K562 (cell line): ENCODE measurements at regions of chr9 and their contacts with region 1.

Region 1: DNA sequence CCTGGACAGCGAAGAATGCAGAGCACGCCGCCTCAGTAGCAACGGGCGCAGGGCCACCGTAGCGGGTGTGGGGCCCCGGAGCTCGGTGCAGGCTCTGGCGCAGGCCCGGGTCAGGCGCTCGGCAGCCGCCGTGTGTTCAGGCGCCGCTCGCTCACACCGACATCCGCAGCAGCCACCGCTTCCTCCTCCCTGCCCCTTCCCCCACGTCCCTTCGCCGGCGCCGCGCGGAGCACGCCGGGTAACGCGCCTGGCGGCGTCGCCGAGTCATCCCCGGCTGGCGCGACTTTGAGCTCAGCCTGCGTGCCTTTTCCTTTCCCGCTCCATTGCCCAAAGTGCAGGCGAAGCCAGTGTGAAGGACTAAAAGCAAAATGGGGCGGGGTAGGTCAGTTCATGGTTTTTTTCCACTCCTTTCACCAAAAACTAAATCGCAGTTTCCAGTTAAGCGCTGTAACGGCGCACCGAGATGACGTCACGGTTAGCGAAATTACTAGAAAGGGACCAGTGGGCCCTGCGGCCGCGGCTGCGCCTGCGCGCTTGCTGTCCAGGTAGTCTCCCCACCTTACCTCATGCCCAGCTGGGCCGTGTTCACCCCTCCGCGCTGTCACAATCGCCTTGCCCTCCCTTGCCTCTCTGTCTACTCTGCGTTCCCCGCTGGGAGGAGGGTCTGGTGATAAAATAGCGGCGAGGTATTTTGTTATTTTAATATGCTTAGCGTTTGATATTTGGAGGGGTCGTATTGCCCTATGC is at the start of gene UBQLN1:
- DNase-seq: peak; percentile 87 to 93 (median 90)
- ATAC-seq: peak; percentile 83
- H3K4me3 ChIP-seq: peak within 1 kb of the TSS; percentile 93
- H3K27ac ChIP-seq: peak within 1 kb of the TSS; percentile 99
- H3K4me1 ChIP-seq: peaks cover 4 to 6% of the 10 kb centered on the region in 2 experiments; a peak in 4 of 5 replicates
- H3K27me3 ChIP-seq: no peaks in the 10 kb centered on the region
- CTCF ChIP-seq: no peak
- EP300 ChIP-seq: 0 out of 2 replicates have a peak, but pooled peaks have one; percentile 29
- POLR2A ChIP-seq: peak; percentile 85
- RAD21 ChIP-seq: no peak
- polyA plus RNA-seq, gene UBQLN1: 7.5 to 10.2 TPM

Region 2: DNA sequence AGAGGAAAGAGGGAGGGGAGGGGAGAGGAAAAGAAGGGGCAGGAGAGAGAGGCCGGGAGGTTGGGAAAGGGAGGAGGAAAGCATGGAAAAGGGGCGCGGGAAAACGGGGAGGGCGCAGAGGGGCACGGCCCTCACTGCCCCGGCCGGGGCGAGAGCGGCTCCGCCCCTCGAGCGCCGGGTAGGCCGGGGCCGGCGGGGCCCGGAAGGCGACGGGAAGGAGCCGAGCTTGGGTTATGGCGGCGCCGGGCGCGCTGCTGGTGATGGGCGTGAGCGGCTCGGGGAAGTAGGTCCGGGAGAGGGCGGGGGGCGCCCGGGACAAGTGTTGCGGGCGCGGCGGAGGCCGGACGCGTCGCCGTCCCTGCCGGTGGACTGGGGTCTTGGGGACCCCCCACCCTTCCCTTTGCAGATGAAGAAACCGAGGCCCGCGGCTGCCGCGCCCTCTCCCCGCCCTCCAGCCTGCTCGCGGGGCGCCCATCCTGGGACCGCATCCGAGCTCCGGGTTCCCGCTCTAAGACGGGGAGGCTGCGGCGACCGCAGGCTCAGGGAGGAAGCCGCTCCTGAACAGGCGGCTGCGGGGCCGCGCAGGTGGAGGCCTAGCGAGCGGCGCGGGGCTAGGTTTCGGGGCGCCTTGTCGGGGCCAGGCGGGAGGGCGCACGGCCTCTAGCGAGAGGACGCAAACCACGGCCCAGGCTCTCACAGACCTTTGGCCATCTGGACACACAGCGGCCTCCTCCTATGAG is 84.8 kb before region 1 on chr9 and contains the start of gene IDNK:
- CTCF ChIA-PET with region 1: interaction called, 3 read pairs
- POLR2A ChIA-PET with region 1: no interaction called
- in situ Hi-C with region 1: no loop called
- intact Hi-C with region 1: loop called (anchors 5 kb)
- DNase-seq: peak; percentile 47 to 81 (median 67)
- ATAC-seq: peak; percentile 90
- H3K4me3 ChIP-seq: peak within 1 kb of the TSS; percentile 65
- H3K27ac ChIP-seq: peak within 1 kb of the TSS; percentile 72
- H3K4me1 ChIP-seq: peaks cover 11 to 14% of the 10 kb centered on the region in 2 experiments; a peak in 3 of 5 replicates
- H3K27me3 ChIP-seq: no peaks in the 10 kb centered on the region
- CTCF ChIP-seq: no peak
- EP300 ChIP-seq: no peak
- POLR2A ChIP-seq: peak; percentile 77
- RAD21 ChIP-seq: no peak
- polyA plus RNA-seq, gene IDNK: 0.50 to 0.62 TPM

Region 3: GRCh38 chr9:83980395-83981125 is 272.6 kb after region 1 on chr9 and contains the start of gene RMI1:
- CTCF ChIA-PET with region 1: no interaction called
- POLR2A ChIA-PET with region 1: interaction called, 3 read pairs
- in situ Hi-C with region 1: no loop called
- intact Hi-C with region 1: loop called (anchors 10 kb)
- DNase-seq: peak; percentile 76 to 98 (median 84)
- ATAC-seq: peak; percentile 72
- H3K4me3 ChIP-seq: peak within 1 kb of the TSS; percentile 74
- H3K27ac ChIP-seq: peak within 1 kb of the TSS; percentile 100
- H3K4me1 ChIP-seq: peaks cover 4 to 7% of the 10 kb centered on the region in 2 experiments; a peak in 1 of 5 replicates
- H3K27me3 ChIP-seq: no peaks in the 10 kb centered on the region
- CTCF ChIP-seq: peak in 1 of 3 experiments; percentile 10; a peak in 1 of 6 replicates
- EP300 ChIP-seq: no peak
- POLR2A ChIP-seq: peak; percentile 93
- RAD21 ChIP-seq: no peak
- polyA plus RNA-seq, gene RMI1: 7.7 to 10.6 TPM